Activated B cell treated with CpG ODN at 0.5 μM for 24 hours (primary cell): ENCODE measurements at regions of chr6 and their contacts with region 1.

Region 1: GRCh38 chr6:12024699-12025434 is 12.8 kb downstream of the HIVEP1 start:
- DNase-seq: no peak
- ATAC-seq: no peak
- H3K4me3 Mint-ChIP-seq: no peak overlapping the region
- H3K27ac Mint-ChIP-seq: no peak overlapping the region
- H3K4me1 Mint-ChIP-seq: peaks cover 27% of the 10 kb centered on the region
- H3K27me3 Mint-ChIP-seq: no peaks in the 10 kb centered on the region
- CTCF ChIP-seq: no peak

Region 2: GRCh38 chr6:12039540-12040459 is 14.9 kb after region 1 on chr6:
- CTCF ChIA-PET with region 1: interaction called, 3 read pairs
- POLR2A ChIA-PET with region 1: no interaction called
- intact Hi-C with region 1: loop called (anchors 2 kb)
- DNase-seq: no peak
- ATAC-seq: no peak
- H3K4me3 Mint-ChIP-seq: no peak overlapping the region
- H3K27ac Mint-ChIP-seq: peak overlapping the region; percentile 73
- H3K4me1 Mint-ChIP-seq: peaks cover 58% of the 10 kb centered on the region
- H3K27me3 Mint-ChIP-seq: no peaks in the 10 kb centered on the region
- CTCF ChIP-seq: no peak